PC-3 (cell line): ENCODE measurements at regions of chr20 and their contacts with region 1.

Region 1: GRCh38 chr20:10434467-10434831 is 427 bp upstream of the MKKS start:
- DNase-seq: peak; percentile 99
- ATAC-seq: peak; percentile 76
- H3K4me3 ChIP-seq: peak overlapping the region; percentile 73
- H3K27ac ChIP-seq: peak overlapping the region; percentile 79
- H3K4me1 ChIP-seq: peaks cover 42% of the 10 kb centered on the region
- H3K27me3 ChIP-seq: no peaks in the 10 kb centered on the region
- CTCF ChIP-seq: no peak

Region 2: GRCh38 chr20:10415014-10415650 is 19.3 kb before region 1 on chr20:
- CTCF ChIA-PET with region 1: no interaction called
- POLR2A ChIA-PET with region 1: no interaction called
- intact Hi-C with region 1: loop called (anchors 1 kb)
- DNase-seq: peak; percentile 83
- ATAC-seq: peak; percentile 76
- H3K4me3 ChIP-seq: no peak overlapping the region
- H3K27ac ChIP-seq: peak overlapping the region; percentile 3; the same call in 1 of the 2 replicates
- H3K4me1 ChIP-seq: peaks cover 32% of the 10 kb centered on the region
- H3K27me3 ChIP-seq: no peaks in the 10 kb centered on the region
- CTCF ChIP-seq: no peak